OCI-LY7 (cell line): ENCODE measurements at regions of chr18 and their contacts with region 1.

Region 1: DNA sequence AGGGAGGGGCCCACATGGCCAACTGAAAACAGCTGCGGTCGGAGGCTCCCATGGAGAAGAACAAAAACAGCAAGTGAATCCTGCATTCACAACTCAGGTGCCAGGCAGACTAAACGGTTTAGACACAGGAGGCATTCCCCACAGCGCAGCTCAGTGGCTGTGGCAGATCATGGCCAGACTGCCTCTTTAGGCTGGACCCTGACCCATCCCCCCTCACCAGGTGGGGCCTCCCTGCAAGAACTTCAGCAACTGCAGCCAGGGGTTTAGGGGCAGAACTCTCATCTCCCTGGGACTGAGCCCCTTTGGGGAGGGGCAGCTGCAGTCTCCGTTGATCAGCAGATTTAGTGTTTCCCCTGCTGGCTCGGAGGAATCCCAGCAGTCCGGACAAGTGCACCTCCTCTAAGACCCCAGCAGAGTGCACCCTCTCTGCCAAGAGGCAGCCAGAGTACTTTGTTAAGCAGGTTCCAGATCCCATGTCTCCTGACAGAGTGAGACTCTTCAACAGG is 346.7 kb downstream of the SS18 start:
- DNase-seq: no peak
- H3K4me3 ChIP-seq: no peak overlapping the region
- H3K27ac ChIP-seq: no peak overlapping the region
- H3K4me1 ChIP-seq: no peaks in the 10 kb centered on the region
- CTCF ChIP-seq: no peak

Region 2: GRCh38 chr18:25686960-25687520 is 56.7 kb before region 1 on chr18:
- CTCF ChIA-PET with region 1: no interaction called
- POLR2A ChIA-PET with region 1: no interaction called
- intact Hi-C with region 1: loop called (anchors 5 kb)
- DNase-seq: no peak
- H3K4me3 ChIP-seq: no peak overlapping the region
- H3K27ac ChIP-seq: no peak overlapping the region
- H3K4me1 ChIP-seq: no peaks in the 10 kb centered on the region
- CTCF ChIP-seq: no peak